Gastrocnemius medialis (tissue), 4 donors: ENCODE measurements at regions of chr12 and their contacts with region 1.

Region 1: DNA sequence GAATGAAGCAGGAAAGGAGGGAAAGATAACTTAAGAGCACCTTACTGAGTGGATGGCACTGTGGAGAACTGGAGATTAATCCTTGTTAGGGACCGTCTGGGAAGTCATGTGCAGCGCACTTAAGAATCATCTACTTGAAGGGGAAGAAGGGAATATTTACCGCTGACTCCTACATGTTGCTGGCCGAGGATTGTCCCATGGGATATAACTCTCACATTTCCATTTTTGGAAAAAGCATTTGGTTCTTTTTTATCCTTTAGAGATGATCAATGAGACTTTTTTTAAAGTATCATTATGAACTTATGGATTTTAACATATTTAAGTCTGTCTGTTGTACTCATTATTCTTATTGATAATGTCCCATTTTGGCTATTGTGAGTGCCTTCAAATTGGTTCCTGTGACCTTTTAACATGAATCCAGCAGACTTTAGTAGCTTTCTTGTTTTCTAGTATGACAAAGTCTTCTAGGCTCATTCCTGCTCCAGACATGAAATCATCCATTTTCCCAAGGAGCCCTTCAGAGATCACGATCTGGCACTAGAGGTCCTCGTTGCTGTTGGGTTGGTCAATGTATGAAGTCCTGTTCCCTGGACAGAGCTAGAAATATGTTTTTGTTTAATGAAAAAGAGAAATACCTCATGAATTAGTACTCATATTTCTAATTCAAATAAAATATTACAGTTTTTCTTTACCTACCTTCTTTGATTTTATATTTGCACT is 20.2 kb upstream of the FAM234B start:
- DNase-seq: no peak
- ATAC-seq: peak in 1 of 2 donors; percentile 80
- H3K4me3 ChIP-seq: no peak overlapping the region
- H3K27ac ChIP-seq: no peak overlapping the region
- H3K4me1 ChIP-seq: peaks cover 0 to 4% of the 10 kb centered on the region in 2 donors
- H3K27me3 ChIP-seq: no peaks in the 10 kb centered on the region
- CTCF ChIP-seq: peak in 1 of 5 experiments; percentile 40
- POLR2A ChIP-seq: no peak

Region 2: GRCh38 chr12:13233830-13234641 is 210.1 kb after region 1 on chr12:
- in situ Hi-C with region 1: no loop called
- intact Hi-C with region 1: loop called (anchors 5 kb)
- DNase-seq: no peak
- ATAC-seq: peak in 1 of 2 donors; percentile 44
- H3K4me3 ChIP-seq: no peak overlapping the region
- H3K27ac ChIP-seq: no peak overlapping the region
- H3K4me1 ChIP-seq: no peaks in the 10 kb centered on the region
- H3K27me3 ChIP-seq: no peaks in the 10 kb centered on the region
- CTCF ChIP-seq: peak; percentile 30 to 68 (median 66)
- POLR2A ChIP-seq: no peak